Gastrocnemius medialis (tissue), 4 donors: ENCODE measurements at regions of chr5 and their contacts with region 1.

Region 1: DNA sequence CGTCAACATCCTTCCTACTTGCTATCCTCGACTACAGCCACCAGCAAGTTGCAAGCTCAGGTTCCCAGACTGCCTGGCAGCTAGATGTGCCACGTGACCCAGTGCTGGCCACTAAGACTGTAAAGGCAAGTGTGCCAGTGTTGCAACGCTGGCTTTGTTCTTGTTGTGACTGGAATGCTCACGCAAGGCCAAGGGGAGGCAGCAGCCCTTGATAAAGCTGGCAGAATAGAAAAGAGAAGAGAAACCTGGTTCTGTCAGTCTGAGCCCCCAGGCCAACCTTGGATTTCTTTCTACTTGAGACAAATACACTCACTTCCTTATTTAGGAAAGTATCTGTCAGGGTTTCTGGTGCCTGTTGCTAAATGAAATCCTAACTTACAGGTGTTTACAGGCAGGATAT is 113.0 kb downstream of the KLHL3 start:
- DNase-seq: peak; percentile 94 to 97
- ATAC-seq: peak; percentile 72 to 82
- H3K4me3 ChIP-seq: peak overlapping the region in 2 of 4 donors; percentile 13 to 23
- H3K27ac ChIP-seq: peak overlapping the region; percentile 78 to 96 (median 92)
- H3K4me1 ChIP-seq: peaks cover 28 to 74% of the 10 kb centered on the region in 2 donors
- H3K27me3 ChIP-seq: no peaks in the 10 kb centered on the region
- CTCF ChIP-seq: no peak
- POLR2A ChIP-seq: no peak

Region 2: DNA sequence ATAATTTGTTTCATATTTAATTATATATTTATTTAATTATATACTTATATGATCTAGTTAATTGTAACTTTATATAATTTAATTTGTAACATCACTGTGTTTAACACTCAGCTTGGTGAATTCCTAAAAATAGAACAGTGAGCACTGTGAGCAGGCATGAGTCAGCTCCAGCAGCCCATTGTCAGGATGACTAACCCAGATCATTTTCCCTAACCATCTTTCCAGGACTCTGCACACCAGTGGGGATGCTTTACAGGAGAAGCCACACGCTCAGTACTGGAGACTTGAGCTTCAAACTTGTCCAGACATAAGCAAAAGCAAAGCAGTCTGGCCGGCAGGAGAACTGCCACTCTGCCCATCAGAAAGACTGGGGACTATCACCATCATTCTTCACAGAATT is 811.3 kb before region 1 on chr5:
- in situ Hi-C with region 1: no loop called
- intact Hi-C with region 1: loop called (anchors 5 kb)
- DNase-seq: peak; percentile 57 to 76
- ATAC-seq: peak; percentile 95 to 97
- H3K4me3 ChIP-seq: no peak overlapping the region
- H3K27ac ChIP-seq: peak overlapping the region; percentile 84 to 86 (median 85)
- H3K4me1 ChIP-seq: peaks cover 16 to 25% of the 10 kb centered on the region in 2 donors
- H3K27me3 ChIP-seq: no peaks in the 10 kb centered on the region
- CTCF ChIP-seq: no peak
- POLR2A ChIP-seq: peak in 1 of 2 donors; percentile 39

Region 3: GRCh38 chr5:137320056-137321045 is 302.5 kb before region 1 on chr5:
- in situ Hi-C with region 1: no loop called
- intact Hi-C with region 1: loop called (anchors 5 kb)
- DNase-seq: peak; percentile 16 to 32
- ATAC-seq: peak in 1 of 2 donors; percentile 20
- H3K4me3 ChIP-seq: no peak overlapping the region
- H3K27ac ChIP-seq: no peak overlapping the region
- H3K4me1 ChIP-seq: peaks cover 9 to 20% of the 10 kb centered on the region in 2 donors
- H3K27me3 ChIP-seq: no peaks in the 10 kb centered on the region
- CTCF ChIP-seq: peak; percentile 67 to 87 (median 84)
- POLR2A ChIP-seq: no peak

Region 4: DNA sequence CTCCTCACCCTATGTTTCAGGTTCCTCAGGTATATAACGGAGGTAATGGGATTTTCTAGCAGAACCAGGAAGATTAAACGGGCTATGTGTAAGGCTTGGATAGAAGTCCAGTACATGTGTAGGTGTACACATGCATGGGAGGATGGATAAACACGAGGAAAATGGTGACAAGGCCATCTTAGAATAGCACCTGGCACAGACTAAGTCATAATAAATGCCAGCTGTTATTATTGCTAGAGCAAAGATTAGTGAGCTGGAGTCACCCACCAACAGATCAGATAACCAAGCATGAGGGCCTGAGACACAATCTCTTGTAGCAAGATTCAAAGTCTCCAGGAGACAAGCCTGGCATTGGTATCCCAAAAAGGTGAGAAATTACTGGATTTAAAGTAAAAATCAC is 144.8 kb before region 1 on chr5:
- in situ Hi-C with region 1: no loop called
- intact Hi-C with region 1: loop called (anchors 5 kb)
- DNase-seq: peak; percentile 30 to 46
- ATAC-seq: peak; percentile 94 to 96
- H3K4me3 ChIP-seq: no peak overlapping the region
- H3K27ac ChIP-seq: peak overlapping the region; percentile 21 to 81 (median 74)
- H3K4me1 ChIP-seq: peaks cover 24 to 27% of the 10 kb centered on the region in 2 donors
- H3K27me3 ChIP-seq: no peaks in the 10 kb centered on the region
- CTCF ChIP-seq: no peak
- POLR2A ChIP-seq: peak in 1 of 2 donors; percentile 19

Region 5: GRCh38 chr5:137754126-137754960 is 131.5 kb after region 1 on chr5 and contains the start of gene HNRNPA0:
- in situ Hi-C with region 1: loop called in 1 of 4 experiments (anchors 10 kb)
- intact Hi-C with region 1: loop called (anchors 5 kb)
- DNase-seq: peak; percentile 96 to 97
- ATAC-seq: peak; percentile 92 to 95
- H3K4me3 ChIP-seq: peak within 1 kb of the TSS; percentile 80 to 98 (median 96)
- H3K27ac ChIP-seq: peak within 1 kb of the TSS; percentile 98 to 100 (median 100)
- H3K4me1 ChIP-seq: peaks cover 28 to 31% of the 10 kb centered on the region in 2 donors
- H3K27me3 ChIP-seq: no peaks in the 10 kb centered on the region
- CTCF ChIP-seq: peak in 2 of 5 experiments; percentile 19 to 26
- POLR2A ChIP-seq: peak; percentile 96 to 99
- total RNA-seq, gene HNRNPA0: 4.2 to 6.0 (median 5.2) TPM

Region 6: DNA sequence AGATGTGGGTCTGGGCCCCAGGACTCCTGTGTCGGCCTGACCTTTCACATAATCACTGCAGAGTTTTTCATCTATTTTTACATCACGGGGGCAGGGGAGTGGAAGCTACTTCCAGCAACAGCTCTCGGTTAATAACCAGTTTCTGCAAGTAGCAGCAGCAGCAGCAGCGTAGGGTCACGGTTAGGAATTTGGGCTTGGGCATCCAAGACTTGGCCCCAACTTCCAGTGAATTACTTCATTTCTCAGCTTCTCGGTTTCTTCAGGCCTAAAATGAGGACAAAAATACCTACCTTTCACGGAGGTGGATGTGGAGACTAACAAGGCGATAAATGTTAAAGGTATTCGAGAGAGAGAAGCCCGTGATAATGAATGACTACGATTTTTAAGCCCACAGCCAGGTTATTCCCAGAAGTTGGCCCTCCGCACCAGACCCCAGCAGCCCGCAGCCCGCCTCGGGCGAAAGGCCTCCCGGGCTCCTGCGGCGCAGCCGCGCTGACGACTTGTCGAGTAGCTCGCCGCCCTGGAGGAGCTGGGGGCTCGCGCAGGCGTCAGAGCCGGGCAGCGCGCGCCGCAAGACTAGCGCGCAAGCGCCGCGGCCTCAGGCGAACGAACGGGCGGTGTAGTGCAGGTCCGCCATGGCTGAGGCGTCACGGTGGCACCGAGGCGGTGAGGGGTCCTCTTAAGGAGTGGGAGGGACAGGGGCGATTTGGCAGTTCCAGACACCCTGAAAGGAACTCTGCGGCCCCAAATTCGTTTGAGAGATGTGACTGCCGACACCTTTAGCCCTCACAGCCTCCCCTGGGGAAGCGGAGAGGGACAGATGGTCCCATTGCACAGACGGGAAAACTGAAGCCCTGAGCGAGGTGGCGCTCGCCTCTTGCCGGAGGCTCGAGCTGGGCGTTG is 266.3 kb after region 1 on chr5 and contains the start of gene PKD2L2:
- in situ Hi-C with region 1: no loop called
- intact Hi-C with region 1: loop called (anchors 5 kb)
- DNase-seq: peak; percentile 50 to 82
- ATAC-seq: peak; percentile 42 to 66
- H3K4me3 ChIP-seq: peak within 1 kb of the TSS; percentile 43 to 51 (median 46)
- H3K27ac ChIP-seq: peak within 1 kb of the TSS; percentile 88 to 97 (median 92)
- H3K4me1 ChIP-seq: peaks cover 10 to 40% of the 10 kb centered on the region in 2 donors
- H3K27me3 ChIP-seq: no peaks in the 10 kb centered on the region
- CTCF ChIP-seq: no peak
- POLR2A ChIP-seq: peak; percentile 41 to 50
- total RNA-seq, gene PKD2L2: 0.70 to 4.8 (median 0.94) TPM in 3 of 4 donors, not detected in the other

Region 7: DNA sequence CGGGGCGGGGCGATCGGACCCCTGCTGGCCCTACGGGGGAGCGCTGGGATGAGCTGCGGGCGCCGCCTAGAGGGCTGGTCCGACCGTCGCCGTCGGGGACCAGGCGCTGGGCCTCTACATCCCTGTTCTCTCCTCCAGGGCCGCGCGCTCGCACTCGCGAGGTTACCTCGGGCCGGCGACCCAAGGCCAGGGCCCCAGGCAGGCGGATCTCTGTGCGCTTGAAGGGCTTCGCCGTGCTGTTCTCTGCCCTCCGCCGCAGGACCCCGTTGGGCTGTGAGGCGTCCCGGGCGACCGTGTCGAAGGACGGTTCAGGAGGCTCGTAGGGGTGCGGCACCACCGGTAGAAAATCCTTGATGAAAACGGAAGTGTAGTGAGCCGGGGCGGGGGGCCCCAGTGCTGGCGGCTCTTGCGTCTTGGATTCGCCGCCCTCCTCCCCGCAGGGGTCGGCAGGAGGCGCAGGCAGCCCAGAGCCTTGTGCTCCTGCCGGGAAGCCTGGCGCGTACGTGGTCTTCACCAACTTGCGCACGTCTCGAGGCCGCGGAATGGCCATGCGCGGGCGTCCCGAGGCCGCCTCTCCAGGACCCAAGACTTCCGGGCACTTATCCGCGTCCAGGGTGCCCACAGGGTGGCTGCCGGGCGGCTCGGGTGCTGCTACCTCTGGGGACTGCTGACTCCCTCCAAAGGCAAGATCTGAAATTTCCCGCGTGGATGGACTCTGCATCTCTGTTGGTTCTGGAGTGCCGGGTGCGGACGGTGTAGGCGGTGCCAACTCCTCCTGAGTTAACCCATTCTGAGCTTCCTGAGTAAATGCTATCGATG is 1770.0 kb after region 1 on chr5:
- in situ Hi-C with region 1: no loop called
- intact Hi-C with region 1: loop called (anchors 5 kb)
- DNase-seq: peak in 1 of 2 donors; percentile 61
- ATAC-seq: no peak
- H3K4me3 ChIP-seq: peak overlapping the region; percentile 67 to 84 (median 72)
- H3K27ac ChIP-seq: peak overlapping the region; percentile 99 to 100 (median 100)
- H3K4me1 ChIP-seq: peaks cover 35 to 63% of the 10 kb centered on the region in 2 donors
- H3K27me3 ChIP-seq: no peaks in the 10 kb centered on the region
- CTCF ChIP-seq: peak; percentile 36 to 60 (median 51)
- POLR2A ChIP-seq: no peak